AG04449 (cell line): ENCODE measurements at regions of chr18 and their contacts with region 1.

Region 1: GRCh38 chr18:55307505-55307904 is 280.5 kb downstream of the TCF4 start:
- DNase-seq: no peak
- H3K4me3 ChIP-seq: no peak overlapping the region
- CTCF ChIP-seq: no peak

Region 2: DNA sequence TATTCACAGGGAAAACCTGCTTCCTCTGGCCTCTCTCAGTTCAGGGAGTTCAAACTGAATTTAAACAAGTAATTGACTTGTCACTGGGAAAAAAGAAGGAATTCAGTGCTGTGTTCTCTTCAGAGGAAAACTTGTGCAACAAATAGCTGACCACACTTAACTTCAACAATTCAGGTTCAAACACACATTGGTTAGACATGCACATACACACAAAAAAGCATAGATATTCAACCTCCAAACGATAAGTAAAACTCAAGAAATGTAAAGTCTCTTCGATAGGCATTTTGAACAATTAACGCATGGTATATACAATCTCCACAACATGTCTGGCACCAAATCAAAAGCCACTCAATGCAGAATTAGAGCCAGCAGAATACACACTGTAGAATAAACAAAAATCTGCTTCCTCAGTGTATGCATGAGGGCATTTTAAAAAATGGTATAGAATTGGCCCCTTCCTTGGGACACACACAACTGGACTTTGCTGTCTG is 11.5 kb after region 1 on chr18:
- CTCF ChIA-PET with region 1: interaction called, 10 read pairs
- POLR2A ChIA-PET with region 1: no interaction called
- DNase-seq: no peak
- H3K4me3 ChIP-seq: peak overlapping the region; percentile 37
- CTCF ChIP-seq: no peak

Region 3: GRCh38 chr18:55343396-55344073 is 36.0 kb after region 1 on chr18:
- CTCF ChIA-PET with region 1: no interaction called
- POLR2A ChIA-PET with region 1: no interaction called
- DNase-seq: no peak
- H3K4me3 ChIP-seq: no peak overlapping the region
- CTCF ChIP-seq: peak; percentile 26